Heart left ventricle (tissue), 16 donors: ENCODE measurements at regions of chr3 and their contacts with region 1.

Region 1: DNA sequence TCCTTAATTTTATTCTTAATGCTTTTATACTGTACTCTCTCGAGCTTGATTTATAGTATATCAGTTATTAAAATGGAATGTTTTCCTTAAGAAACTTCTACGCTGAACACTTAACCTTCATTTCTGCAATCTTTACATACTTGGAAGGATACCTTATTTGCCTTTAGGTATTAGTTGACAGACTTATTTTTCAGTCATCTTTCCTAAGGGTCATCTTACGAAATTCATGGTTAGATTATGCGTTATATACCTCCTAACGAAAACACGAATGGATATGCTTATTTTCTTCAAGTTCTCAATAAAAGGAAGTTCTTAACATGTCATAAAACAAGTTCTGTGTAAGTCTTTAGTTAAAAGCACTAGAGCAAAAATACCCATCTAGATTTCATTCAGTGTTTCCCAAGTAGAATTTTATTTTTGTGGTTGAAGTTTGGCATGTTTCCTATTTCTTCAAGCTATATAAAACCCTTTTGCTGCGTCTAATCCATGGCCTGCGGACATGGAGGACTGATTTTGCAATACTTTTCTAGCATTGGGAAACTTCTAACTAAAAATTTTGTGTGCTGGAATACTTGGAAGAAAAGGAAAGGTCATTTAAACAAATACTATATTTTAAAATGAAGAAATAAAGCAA is 231.3 kb downstream of the TP63 start:
- DNase-seq: no peak
- ATAC-seq: no peak
- H3K4me3 ChIP-seq: no peak overlapping the region
- H3K27ac ChIP-seq: no peak overlapping the region
- H3K4me1 ChIP-seq: peaks cover 0 to 11% (median 0%) of the 10 kb centered on the region in 12 donors
- H3K27me3 ChIP-seq: no peaks in the 10 kb centered on the region
- CTCF ChIP-seq: no peak
- POLR2A ChIP-seq: no peak

Region 2: DNA sequence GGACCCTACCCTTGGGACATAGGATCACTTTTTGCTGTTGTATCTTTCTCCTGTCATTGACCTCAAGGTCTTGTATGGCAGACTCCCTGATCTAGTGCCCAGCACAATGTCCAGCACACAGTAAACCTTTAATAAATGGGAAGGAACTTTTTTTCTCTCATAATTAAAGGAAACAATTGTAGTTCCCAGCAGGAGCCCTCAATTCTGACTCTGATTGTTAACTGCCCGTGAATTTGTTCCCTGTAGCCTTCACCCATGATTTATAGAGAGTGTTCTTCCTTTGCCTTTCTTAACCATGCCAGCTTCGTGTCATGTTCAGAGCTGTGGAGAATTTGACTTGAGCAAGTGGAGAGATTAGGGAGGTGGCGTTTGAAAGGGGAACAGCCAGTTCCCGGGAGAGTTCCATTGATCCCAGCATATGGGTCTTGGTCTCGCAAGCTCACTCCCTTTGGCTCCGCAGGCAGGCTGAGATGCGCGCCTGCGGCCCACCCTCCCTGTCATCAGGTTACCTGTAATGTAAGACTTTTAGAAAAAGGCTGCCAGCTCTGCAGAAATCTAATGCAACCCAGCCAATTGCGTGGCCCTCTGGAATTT is 48.8 kb before region 1 on chr3:
- intact Hi-C with region 1: loop called in 1 of 10 experiments (anchors 5 kb)
- DNase-seq: peak in 1 of 5 donors; percentile 58
- ATAC-seq: no peak
- H3K4me3 ChIP-seq: no peak overlapping the region
- H3K27ac ChIP-seq: no peak overlapping the region
- H3K4me1 ChIP-seq: no peaks in the 10 kb centered on the region
- H3K27me3 ChIP-seq: no peaks in the 10 kb centered on the region
- CTCF ChIP-seq: no peak
- POLR2A ChIP-seq: no peak